ENCODE measurements at regions of chr4 and their contacts with region 1.

Region 1: GRCh38 chr4:39032218-39033085 is at the start of gene TMEM156:
- DNase-seq: peak; percentile 50
- ATAC-seq: peak; percentile 87
- H3K4me3 Mint-ChIP-seq: peak within 1 kb of the TSS; percentile 79
- H3K27ac Mint-ChIP-seq: peak within 1 kb of the TSS; percentile 92
- H3K4me1 Mint-ChIP-seq: peaks cover 54% of the 10 kb centered on the region
- H3K27me3 Mint-ChIP-seq: no peaks in the 10 kb centered on the region
- CTCF ChIP-seq: no peak
- total RNA-seq, gene TMEM156: 11.7 to 12.0 TPM

Region 2: DNA sequence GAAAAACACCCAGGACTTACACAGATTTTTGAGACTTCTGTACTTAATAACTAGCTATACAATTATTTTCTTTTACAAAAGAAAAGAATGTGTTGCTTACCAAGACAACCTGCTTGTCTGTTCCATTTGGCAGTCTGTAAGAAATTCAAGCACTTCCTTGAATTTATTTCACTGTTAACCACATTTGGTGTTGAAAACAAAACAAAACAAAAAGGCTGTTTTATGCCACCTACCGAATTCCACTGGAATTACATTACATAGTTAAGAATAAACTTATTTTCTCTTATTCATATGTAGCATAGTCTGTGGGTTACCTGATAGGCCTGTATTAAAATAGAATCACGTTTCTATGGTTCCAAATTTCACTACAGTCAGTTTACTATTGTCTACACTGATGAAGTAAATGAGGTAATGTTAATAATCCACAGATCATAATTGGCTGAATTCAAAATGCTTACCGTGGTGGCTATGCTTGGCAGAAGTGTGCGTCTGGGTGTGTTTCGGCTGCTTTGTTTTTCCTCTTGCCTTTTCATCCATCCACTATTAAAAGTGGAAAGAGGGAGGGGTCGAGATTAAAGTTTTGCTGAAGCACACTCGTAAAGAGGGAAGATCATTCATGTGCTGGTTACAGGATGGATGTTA is 227.7 kb before region 1 on chr4 and contains the start of gene TLR1:
- CTCF ChIA-PET with region 1: no interaction called
- POLR2A ChIA-PET with region 1: no interaction called
- intact Hi-C with region 1: no loop called
- DNase-seq: no peak
- ATAC-seq: peak; percentile 82
- H3K4me3 Mint-ChIP-seq: peak within 1 kb of the TSS; percentile 64
- H3K27ac Mint-ChIP-seq: peak within 1 kb of the TSS; percentile 88
- H3K4me1 Mint-ChIP-seq: peaks cover 19% of the 10 kb centered on the region
- H3K27me3 Mint-ChIP-seq: no peaks in the 10 kb centered on the region
- CTCF ChIP-seq: peak; percentile 77
- total RNA-seq, gene TLR1: 1.5 to 1.9 TPM

Region 3: DNA sequence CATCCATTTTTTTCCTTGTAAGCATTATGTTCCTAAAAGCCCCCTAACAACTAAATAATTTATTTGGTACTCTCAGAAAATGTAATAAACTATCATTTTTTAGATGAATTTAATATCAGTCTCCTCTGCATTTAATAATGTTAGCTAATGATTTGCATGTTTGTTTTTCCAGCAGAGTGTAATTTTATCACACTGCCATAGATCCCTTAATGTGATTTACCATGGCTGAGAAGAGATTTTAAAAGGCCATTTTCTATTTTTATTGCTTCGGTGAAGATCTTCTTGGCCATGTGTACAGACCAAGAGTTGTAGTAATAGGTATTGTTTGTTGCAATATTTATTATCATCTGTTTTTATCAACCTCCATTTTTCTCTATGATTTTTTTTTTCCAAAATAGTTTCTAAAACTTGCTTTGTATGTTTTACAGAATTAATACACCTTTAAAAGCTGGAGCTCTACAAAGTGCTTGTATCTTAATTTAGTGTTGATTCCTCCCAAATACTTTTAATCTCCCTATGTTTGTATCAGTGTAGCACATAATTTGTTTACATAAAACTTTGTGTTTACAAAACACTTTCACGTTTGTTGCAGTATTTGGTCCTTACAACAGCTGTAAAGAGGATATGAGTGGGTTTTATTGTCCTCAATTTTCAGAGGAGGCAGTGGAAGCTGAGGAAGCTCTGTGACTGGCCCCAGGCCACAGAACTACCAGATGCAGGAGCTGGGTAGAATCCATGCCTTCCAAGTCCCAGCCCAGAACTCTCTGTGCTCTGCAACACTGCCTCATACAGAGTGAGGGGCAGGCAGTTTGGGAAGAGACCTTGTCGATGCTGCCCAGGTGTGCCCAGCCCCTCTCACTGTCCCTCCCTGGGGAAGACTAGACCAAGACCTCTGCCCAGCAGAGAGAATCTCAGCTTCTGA is 106.7 kb before region 1 on chr4:
- CTCF ChIA-PET with region 1: no interaction called
- POLR2A ChIA-PET with region 1: no interaction called
- intact Hi-C with region 1: no loop called
- DNase-seq: no peak
- ATAC-seq: no peak
- H3K4me3 Mint-ChIP-seq: no peak overlapping the region
- H3K27ac Mint-ChIP-seq: no peak overlapping the region
- H3K4me1 Mint-ChIP-seq: peaks cover 6% of the 10 kb centered on the region
- H3K27me3 Mint-ChIP-seq: no peaks in the 10 kb centered on the region
- CTCF ChIP-seq: no peak

Region 4: DNA sequence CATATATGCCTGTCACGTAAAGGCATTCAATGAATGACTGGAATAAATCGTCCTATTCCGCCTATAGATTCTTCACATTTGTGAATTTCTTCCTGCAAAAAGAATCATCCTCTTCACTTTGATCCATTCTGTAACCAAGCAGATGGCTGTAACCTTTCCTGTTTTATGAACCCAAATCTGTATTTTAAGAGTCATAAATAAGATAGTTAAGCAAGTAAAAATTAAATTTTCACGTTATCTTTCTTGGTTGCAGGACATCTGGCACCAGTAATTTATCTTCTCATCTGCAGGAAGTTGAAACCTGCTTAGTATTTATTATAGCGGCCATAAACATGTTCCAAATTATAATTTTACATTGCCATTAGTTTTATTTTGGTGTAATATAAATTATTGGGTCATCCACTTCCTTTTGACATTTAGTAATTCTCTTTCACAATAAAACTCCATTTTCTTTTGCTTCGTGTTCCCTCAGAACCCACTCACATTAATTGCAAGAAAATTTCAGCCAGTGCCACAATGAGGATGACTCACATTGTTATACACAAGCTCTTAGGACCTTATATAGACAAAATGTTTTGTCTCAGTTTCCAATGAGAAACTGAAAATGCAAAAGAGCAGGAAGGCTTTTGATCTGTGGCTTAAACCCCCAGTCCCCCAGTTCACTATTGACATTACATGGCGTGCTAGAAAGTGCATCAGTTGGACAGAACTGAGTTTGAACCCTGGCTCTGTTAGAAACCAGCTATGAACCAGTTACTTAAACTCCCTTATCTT is 51.4 kb before region 1 on chr4:
- CTCF ChIA-PET with region 1: no interaction called
- POLR2A ChIA-PET with region 1: no interaction called
- intact Hi-C with region 1: loop called (anchors 10 kb)
- DNase-seq: peak; percentile 37
- ATAC-seq: peak; percentile 89
- H3K4me3 Mint-ChIP-seq: no peak overlapping the region
- H3K27ac Mint-ChIP-seq: peak overlapping the region; percentile 74
- H3K4me1 Mint-ChIP-seq: peaks cover 49% of the 10 kb centered on the region
- H3K27me3 Mint-ChIP-seq: no peaks in the 10 kb centered on the region
- CTCF ChIP-seq: no peak

Region 5: DNA sequence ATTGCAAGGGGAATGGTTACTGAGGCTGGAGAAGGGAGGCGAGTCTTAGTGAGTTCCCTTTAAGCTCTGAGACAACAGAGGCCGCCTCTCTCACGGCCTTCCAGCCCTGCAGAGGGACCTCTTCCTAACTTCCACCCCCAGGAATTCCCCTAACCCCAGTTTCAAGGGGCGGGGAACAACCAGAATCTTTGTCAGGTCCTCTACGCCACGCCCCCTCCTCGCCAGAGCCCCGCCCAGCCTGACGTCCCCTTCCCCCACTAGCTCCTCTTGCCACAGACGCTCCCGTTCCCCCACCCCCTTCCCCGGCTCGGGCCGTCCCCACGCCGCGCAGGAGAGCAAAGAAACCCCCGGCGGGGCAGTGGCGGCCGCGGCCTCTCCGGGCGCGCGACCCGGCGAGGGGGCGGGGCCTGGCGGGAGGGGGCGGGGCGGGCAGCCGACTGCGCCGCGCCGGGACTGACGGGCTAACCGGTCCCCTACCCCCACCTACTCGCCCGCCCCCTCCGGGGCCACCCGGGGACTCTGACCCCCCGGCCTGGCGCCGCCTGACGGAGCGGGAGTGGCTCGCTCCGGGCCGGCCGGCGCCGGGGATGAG is 12.0 kb after region 1 on chr4:
- CTCF ChIA-PET with region 1: interaction called, 6 read pairs
- POLR2A ChIA-PET with region 1: interaction called, 17 read pairs
- intact Hi-C with region 1: no loop called
- DNase-seq: peak; percentile 97
- ATAC-seq: peak; percentile 90
- H3K4me3 Mint-ChIP-seq: peak overlapping the region; percentile 84
- H3K27ac Mint-ChIP-seq: peak overlapping the region; percentile 77
- H3K4me1 Mint-ChIP-seq: peaks cover 46% of the 10 kb centered on the region
- H3K27me3 Mint-ChIP-seq: no peaks in the 10 kb centered on the region
- CTCF ChIP-seq: no peak